Naive thymus-derived CD4-positive, alpha-beta T cell (primary cell): ENCODE measurements at regions of chr19 and their contacts with region 1.

Region 1: GRCh38 chr19:56403764-56404704 is at the start of gene ZNF583:
- DNase-seq: peak; percentile 82 to 93 (median 90)
- ATAC-seq: peak; percentile 93
- H3K4me3 ChIP-seq: peak within 1 kb of the TSS; percentile 86
- H3K4me3 Mint-ChIP-seq: peak within 1 kb of the TSS; percentile 87 to 98 (median 94)
- H3K27ac ChIP-seq: peak within 1 kb of the TSS; percentile 96
- H3K27ac Mint-ChIP-seq: peak within 1 kb of the TSS; percentile 80 to 98 (median 95)
- H3K4me1 ChIP-seq: peaks cover 8 to 16% of the 10 kb centered on the region in 2 donors
- H3K4me1 Mint-ChIP-seq: peaks cover 19 to 37% (median 30%) of the 10 kb centered on the region in 7 donors
- H3K27me3 ChIP-seq: no peaks in the 10 kb centered on the region
- H3K27me3 Mint-ChIP-seq: no peaks in the 10 kb centered on the region
- total RNA-seq, gene ZNF583: 2.4 to 14.3 (median 3.1) TPM

Region 2: DNA sequence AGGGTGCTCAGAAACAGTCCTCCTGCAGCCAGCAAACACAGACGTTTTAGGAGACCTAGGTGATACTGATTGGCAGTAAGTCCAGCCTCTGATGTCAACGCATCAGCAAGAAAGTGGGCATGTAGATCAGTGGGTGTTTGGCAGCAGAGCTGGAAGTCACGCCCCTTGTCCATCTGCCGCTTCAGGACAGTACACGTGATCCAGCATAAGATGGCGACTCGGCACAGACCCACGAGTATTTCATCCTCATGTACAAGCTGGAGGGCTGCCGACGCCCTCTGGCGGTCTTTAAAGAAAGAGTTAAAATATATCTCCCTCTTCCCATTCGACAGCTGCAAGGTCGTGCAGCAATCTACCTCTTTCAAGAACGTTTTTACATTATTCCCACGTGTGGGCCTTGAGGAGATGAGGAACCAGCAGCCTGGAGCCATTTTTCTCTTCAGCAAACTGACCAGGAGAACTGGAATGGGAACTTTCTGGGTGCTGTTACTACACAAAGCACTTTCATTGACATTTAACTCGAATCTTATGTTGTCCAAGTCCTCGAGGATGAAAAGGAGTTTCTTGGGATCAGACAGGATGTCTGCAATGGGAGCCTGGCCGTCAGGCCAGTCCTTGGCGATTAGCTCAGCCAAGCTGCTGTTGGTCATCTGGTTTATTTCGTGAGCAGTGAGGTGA is 594.5 kb before region 1 on chr19:
- CTCF ChIA-PET with region 1: no interaction called
- POLR2A ChIA-PET with region 1: no interaction called
- intact Hi-C with region 1: no loop called
- DNase-seq: peak in 6 of 9 donors; percentile 0 to 13 (median 8)
- ATAC-seq: peak; percentile 49
- H3K4me3 ChIP-seq: no peak overlapping the region
- H3K4me3 Mint-ChIP-seq: peak overlapping the region in 3 of 10 donors; percentile 4 to 30 (median 14)
- H3K27ac ChIP-seq: no peak overlapping the region
- H3K27ac Mint-ChIP-seq: no peak overlapping the region
- H3K4me1 ChIP-seq: no peaks in the 10 kb centered on the region
- H3K4me1 Mint-ChIP-seq: peaks cover 0 to 5% (median 0%) of the 10 kb centered on the region in 7 donors
- H3K27me3 ChIP-seq: no peaks in the 10 kb centered on the region
- H3K27me3 Mint-ChIP-seq: peaks cover 0 to 38% (median 16%) of the 10 kb centered on the region in 5 donors

Region 3: GRCh38 chr19:56507446-56508289 is 103.6 kb after region 1 on chr19 and contains the start of gene ZNF471:
- CTCF ChIA-PET with region 1: no interaction called
- POLR2A ChIA-PET with region 1: no interaction called
- intact Hi-C with region 1: loop called in 1 of 2 experiments (anchors 1 kb)
- DNase-seq: peak; percentile 44 to 93 (median 82)
- ATAC-seq: peak; percentile 99
- H3K4me3 ChIP-seq: peak within 1 kb of the TSS; percentile 42
- H3K4me3 Mint-ChIP-seq: no peak within 1 kb of the TSS
- H3K27ac ChIP-seq: peak within 1 kb of the TSS; percentile 85
- H3K27ac Mint-ChIP-seq: peak within 1 kb of the TSS in 3 of 9 donors; percentile 3 to 81 (median 10)
- H3K4me1 ChIP-seq: peaks cover 0 to 5% of the 10 kb centered on the region in 2 donors
- H3K4me1 Mint-ChIP-seq: peaks cover 0 to 10% (median 6%) of the 10 kb centered on the region in 7 donors
- H3K27me3 ChIP-seq: no peaks in the 10 kb centered on the region
- H3K27me3 Mint-ChIP-seq: peaks cover 0 to 15% (median 0%) of the 10 kb centered on the region in 5 donors
- total RNA-seq, gene ZNF471: 0.22 to 2.3 (median 1.6) TPM

Region 4: DNA sequence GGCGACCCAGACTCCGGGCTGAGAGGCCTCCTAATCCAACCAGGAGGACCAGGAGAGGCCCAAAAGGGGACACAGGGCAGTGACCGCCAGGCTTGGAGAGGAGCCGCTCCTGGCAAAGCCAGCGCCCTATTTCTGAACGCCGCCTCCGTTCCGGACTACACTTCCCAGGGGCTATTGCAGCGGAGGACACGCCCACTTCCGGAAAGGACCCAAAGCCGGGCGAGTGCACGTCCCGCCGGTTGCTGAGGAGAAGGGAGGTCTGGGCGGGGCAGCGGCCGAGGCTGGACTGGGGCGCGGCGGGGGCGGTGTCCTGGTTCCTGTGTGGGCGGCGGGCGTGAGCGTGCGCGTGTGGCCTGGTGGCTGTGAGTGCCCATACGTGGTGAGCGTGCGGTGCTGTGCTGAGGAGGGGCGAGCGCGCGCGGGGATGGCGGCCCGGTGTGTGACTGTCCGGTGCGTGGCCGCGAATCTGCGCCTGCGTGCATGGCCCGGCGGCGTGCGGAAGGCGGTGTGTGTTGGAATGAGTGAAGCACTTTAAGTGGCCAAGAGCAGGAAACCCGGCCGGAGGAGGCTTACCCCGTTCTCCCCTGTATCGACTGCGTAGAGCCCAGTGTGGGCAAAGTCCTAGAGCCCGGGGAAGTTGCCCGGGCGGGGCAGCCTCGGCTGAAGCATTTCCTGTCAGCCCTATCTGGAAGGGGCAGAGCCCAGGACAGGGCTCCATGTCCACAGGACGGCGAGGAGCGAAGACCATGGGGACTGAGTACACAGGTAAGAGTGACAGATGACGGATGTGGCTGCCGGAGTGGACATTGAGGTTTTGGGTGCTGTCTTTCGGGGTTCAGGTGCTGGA is 163.5 kb after region 1 on chr19 and contains the start of gene ZNF470:
- CTCF ChIA-PET with region 1: no interaction called
- POLR2A ChIA-PET with region 1: no interaction called
- intact Hi-C with region 1: loop called in 1 of 2 experiments (anchors 1 kb)
- DNase-seq: peak; percentile 73 to 86 (median 80)
- ATAC-seq: peak; percentile 98
- H3K4me3 ChIP-seq: peak within 1 kb of the TSS; percentile 86
- H3K4me3 Mint-ChIP-seq: peak within 1 kb of the TSS; percentile 89 to 98 (median 96)
- H3K27ac ChIP-seq: peak within 1 kb of the TSS; percentile 77
- H3K27ac Mint-ChIP-seq: peak within 1 kb of the TSS; percentile 59 to 91 (median 84)
- H3K4me1 ChIP-seq: peaks cover 0 to 9% of the 10 kb centered on the region in 2 donors
- H3K4me1 Mint-ChIP-seq: peaks cover 10 to 25% (median 13%) of the 10 kb centered on the region in 7 donors
- H3K27me3 ChIP-seq: no peaks in the 10 kb centered on the region
- H3K27me3 Mint-ChIP-seq: no peaks in the 10 kb centered on the region
- total RNA-seq, gene ZNF470: 0.98 to 5.9 (median 2.4) TPM

Region 5: GRCh38 chr19:56594783-56595547 is 190.9 kb after region 1 on chr19 and contains the start of gene ZNF71:
- CTCF ChIA-PET with region 1: no interaction called
- POLR2A ChIA-PET with region 1: no interaction called
- intact Hi-C with region 1: loop called in 1 of 2 experiments (anchors 1 kb)
- DNase-seq: peak; percentile 75 to 89 (median 81)
- ATAC-seq: peak; percentile 96
- H3K4me3 ChIP-seq: peak within 1 kb of the TSS; percentile 57
- H3K4me3 Mint-ChIP-seq: peak within 1 kb of the TSS; percentile 83 to 99 (median 90)
- H3K27ac ChIP-seq: peak within 1 kb of the TSS; percentile 71
- H3K27ac Mint-ChIP-seq: peak within 1 kb of the TSS; percentile 72 to 94 (median 86)
- H3K4me1 ChIP-seq: peaks cover 0 to 3% of the 10 kb centered on the region in 2 donors
- H3K4me1 Mint-ChIP-seq: peaks cover 19 to 30% (median 21%) of the 10 kb centered on the region in 7 donors
- H3K27me3 ChIP-seq: no peaks in the 10 kb centered on the region
- H3K27me3 Mint-ChIP-seq: no peaks in the 10 kb centered on the region
- total RNA-seq, gene ZNF71: 4.5 to 7.7 (median 6.6) TPM

Region 6: GRCh38 chr19:57350877-57351805 is 947.1 kb after region 1 on chr19 and contains the start of gene ZNF304:
- CTCF ChIA-PET with region 1: no interaction called
- POLR2A ChIA-PET with region 1: no interaction called
- intact Hi-C with region 1: loop called in 1 of 2 experiments (anchors 10 kb)
- DNase-seq: peak; percentile 51 to 85 (median 76)
- ATAC-seq: peak; percentile 100
- H3K4me3 ChIP-seq: peak within 1 kb of the TSS; percentile 83
- H3K4me3 Mint-ChIP-seq: peak within 1 kb of the TSS; percentile 93 to 97 (median 96)
- H3K27ac ChIP-seq: peak within 1 kb of the TSS; percentile 77
- H3K27ac Mint-ChIP-seq: peak within 1 kb of the TSS; percentile 80 to 96 (median 92)
- H3K4me1 ChIP-seq: peaks cover 11% of the 10 kb centered on the region in 2 donors
- H3K4me1 Mint-ChIP-seq: peaks cover 28 to 43% (median 32%) of the 10 kb centered on the region in 7 donors
- H3K27me3 ChIP-seq: no peaks in the 10 kb centered on the region
- H3K27me3 Mint-ChIP-seq: peaks cover 0 to 11% (median 7%) of the 10 kb centered on the region in 5 donors
- total RNA-seq, gene ZNF304: 6.0 to 12.5 (median 9.0) TPM